ENCODE measurements at regions of chr17 and their contacts with region 1.

Region 1: DNA sequence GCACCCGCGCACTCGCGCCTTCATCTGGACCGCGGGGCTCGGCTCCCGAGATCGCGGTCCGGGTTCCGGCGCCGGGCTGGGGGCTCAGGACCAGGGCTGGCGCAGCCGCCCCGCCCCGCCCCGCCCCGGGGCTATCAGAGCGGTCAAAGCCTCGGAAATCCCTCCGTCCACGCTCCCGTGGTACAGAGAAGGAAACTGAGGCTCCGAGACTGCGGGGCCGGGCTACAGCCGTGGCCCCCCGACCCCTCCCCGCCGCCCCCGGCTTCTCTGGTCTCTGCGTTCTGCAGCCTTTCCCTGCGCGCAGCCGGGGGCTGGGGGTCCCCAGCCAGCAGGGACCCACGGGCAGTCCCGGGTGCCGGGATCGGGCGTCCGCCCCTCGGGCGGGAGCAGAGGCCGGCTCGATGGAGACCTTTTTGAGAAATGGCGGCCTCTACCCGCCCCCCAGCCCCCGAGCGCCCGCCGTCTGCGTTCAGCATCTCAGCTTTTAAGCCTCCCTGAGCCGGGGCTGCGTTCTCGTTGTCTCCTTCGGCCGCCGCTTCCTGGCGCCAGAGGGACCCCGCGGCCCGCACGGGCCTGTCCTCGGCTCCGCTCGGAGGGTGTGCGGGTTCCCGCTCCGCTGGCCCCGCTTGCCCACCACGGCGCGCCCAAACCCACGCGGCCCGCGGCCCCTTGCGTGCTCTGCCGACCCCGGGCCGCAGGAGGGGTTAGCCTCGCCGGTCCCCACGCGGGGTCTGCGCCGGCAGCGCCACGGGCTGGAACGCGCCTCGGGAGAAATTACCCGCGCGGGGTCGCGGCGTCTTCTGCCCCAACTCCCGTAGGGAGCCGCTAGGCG is 1.5 kb upstream of the NPTX1 start:
- DNase-seq: peak in 10 of 14 experiments; percentile 12 to 64 (median 34)
- ATAC-seq: peak; percentile 54
- H3K4me3 ChIP-seq: no peak overlapping the region
- H3K4me3 Mint-ChIP-seq: no peak overlapping the region
- H3K27ac ChIP-seq: no peak overlapping the region
- H3K27ac Mint-ChIP-seq: no peak overlapping the region
- H3K4me1 ChIP-seq: peaks cover 44% of the 10 kb centered on the region
- H3K4me1 Mint-ChIP-seq: peaks cover 15% of the 10 kb centered on the region
- H3K27me3 ChIP-seq: peaks cover 72 to 85% of the 10 kb centered on the region in 2 experiments
- H3K27me3 Mint-ChIP-seq: peaks cover 63% of the 10 kb centered on the region
- CTCF ChIP-seq: peak; percentile 35

Region 2: GRCh38 chr17:80892019-80892855 is 414.4 kb after region 1 on chr17:
- CTCF ChIA-PET with region 1: no interaction called
- POLR2A ChIA-PET with region 1: no interaction called
- intact Hi-C with region 1: loop called in 1 of 2 experiments (anchors 2 kb)
- DNase-seq: peak; percentile 61 to 92 (median 80)
- ATAC-seq: peak; percentile 77
- H3K4me3 ChIP-seq: peak overlapping the region; percentile 37
- H3K4me3 Mint-ChIP-seq: peak overlapping the region; percentile 75
- H3K27ac ChIP-seq: peak overlapping the region; percentile 80 to 82
- H3K27ac Mint-ChIP-seq: peak overlapping the region; percentile 93
- H3K4me1 ChIP-seq: peaks cover 63% of the 10 kb centered on the region
- H3K4me1 Mint-ChIP-seq: peaks cover 50% of the 10 kb centered on the region
- H3K27me3 ChIP-seq: no peaks in the 10 kb centered on the region
- H3K27me3 Mint-ChIP-seq: no peaks in the 10 kb centered on the region
- CTCF ChIP-seq: no peak

Region 3: DNA sequence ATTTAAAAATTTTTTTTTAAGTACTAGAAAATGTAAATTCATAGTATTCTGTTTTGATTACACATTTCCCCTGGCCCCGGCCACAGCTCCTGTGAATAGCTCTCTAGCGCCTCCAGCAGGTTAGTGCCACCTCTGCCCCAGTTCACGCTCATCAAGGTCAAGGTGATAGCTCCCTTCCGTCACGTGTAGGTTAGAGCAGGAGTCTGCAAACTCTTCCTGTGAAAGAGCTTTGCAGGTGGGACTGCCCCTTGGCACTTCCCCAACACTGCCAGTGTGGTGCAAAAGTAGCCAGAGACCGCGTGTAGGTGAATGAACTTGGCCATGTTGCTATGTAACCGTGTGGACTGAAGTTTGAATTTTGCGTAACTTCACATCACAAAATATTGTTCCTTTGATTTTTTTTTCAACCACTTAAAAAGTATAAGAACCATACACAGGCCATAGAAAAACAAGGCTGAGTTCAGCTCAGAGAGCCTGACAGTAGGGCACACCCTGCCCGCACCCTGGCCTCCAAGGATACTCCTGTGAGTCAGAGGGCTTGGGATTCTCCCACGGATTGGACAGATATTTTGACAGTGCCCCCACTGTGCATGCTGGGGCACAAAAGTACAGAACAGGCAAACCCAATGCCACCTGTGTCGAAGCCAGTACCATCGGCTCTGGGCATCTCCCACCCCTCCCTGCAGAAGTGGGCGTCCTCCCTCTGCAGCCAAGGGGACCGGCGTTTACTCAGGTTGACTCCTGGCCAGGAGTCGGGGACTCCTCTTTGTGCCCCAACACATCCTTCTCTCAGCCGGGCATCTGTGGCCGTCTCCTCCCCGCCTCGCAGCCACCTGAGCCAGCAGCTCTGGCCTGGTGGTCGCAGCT is 421.8 kb after region 1 on chr17:
- CTCF ChIA-PET with region 1: no interaction called
- POLR2A ChIA-PET with region 1: no interaction called
- intact Hi-C with region 1: loop called (anchors 1 to 2 kb)
- DNase-seq: peak; percentile 70 to 89 (median 78)
- ATAC-seq: peak; percentile 95
- H3K4me3 ChIP-seq: no peak overlapping the region
- H3K4me3 Mint-ChIP-seq: no peak overlapping the region
- H3K27ac ChIP-seq: no peak overlapping the region
- H3K27ac Mint-ChIP-seq: peak overlapping the region; percentile 47
- H3K4me1 ChIP-seq: peaks cover 22% of the 10 kb centered on the region
- H3K4me1 Mint-ChIP-seq: peaks cover 30% of the 10 kb centered on the region
- H3K27me3 ChIP-seq: no peaks in the 10 kb centered on the region
- H3K27me3 Mint-ChIP-seq: no peaks in the 10 kb centered on the region
- CTCF ChIP-seq: peak; percentile 87

Region 4: GRCh38 chr17:80970044-80970761 is 492.3 kb after region 1 on chr17:
- CTCF ChIA-PET with region 1: no interaction called
- POLR2A ChIA-PET with region 1: interaction called, 3 read pairs
- intact Hi-C with region 1: loop called in 1 of 2 experiments (anchors 5 kb)
- DNase-seq: peak in 13 of 14 experiments; percentile 28 to 66 (median 44)
- ATAC-seq: peak; percentile 82
- H3K4me3 ChIP-seq: no peak overlapping the region
- H3K4me3 Mint-ChIP-seq: no peak overlapping the region
- H3K27ac ChIP-seq: no peak overlapping the region
- H3K27ac Mint-ChIP-seq: no peak overlapping the region
- H3K4me1 ChIP-seq: peaks cover 23% of the 10 kb centered on the region
- H3K4me1 Mint-ChIP-seq: peaks cover 6% of the 10 kb centered on the region
- H3K27me3 ChIP-seq: no peaks in the 10 kb centered on the region
- H3K27me3 Mint-ChIP-seq: no peaks in the 10 kb centered on the region
- CTCF ChIP-seq: peak; percentile 47

Measured in CD4-positive, alpha-beta T cell (primary cell).